CD8-positive, alpha-beta memory T cell (primary cell): ENCODE measurements at regions of chr2 and their contacts with region 1.

Region 1: DNA sequence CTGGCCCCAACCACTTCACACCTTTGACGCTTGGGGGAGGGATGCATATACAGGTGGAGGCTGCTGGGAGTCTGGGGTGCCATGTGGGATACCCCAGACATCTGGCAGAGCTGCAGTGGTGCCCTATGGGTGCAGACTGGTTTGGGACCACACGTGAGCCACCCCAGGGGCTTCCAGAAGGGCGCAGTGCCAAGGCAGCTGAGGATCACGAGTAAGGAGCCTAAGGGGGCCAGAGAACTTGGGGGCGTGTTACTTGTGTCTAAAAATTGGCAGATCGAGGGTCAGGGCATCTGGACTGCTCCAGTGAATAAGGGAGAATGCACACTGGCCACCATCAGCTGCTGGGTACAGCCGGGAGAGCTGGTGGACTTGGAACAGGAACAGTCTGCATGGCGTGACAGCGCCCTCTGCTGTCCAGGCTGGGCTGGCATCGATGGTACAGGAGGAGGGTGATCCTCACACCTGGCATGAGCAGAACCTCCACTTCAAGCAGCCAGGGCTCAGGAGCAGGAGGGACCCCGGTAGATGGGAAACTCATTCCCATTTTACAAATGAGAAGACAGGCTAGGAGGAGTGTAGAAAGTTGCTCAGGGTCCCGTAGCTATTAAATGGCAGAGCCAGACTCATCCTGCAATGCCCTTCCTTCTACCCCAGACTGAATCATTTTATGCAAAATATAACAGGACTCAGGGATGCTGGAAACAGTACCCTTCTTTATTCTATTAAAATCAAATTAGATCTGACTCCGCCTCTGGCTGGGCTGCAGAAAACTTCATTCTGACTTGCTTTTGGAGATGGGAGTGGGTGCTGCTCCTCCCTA is 60.4 kb downstream of the ATOH8 start:
- DNase-seq: peak; percentile 62 to 82 (median 75)
- H3K4me3 ChIP-seq: no peak overlapping the region
- H3K4me3 Mint-ChIP-seq: peak overlapping the region in 1 of 7 donors; percentile 1
- H3K27ac ChIP-seq: no peak overlapping the region
- H3K27ac Mint-ChIP-seq: peak overlapping the region in 1 of 8 donors; percentile 61
- H3K4me1 ChIP-seq: no peaks in the 10 kb centered on the region
- H3K4me1 Mint-ChIP-seq: peaks cover 0 to 3% (median 0%) of the 10 kb centered on the region in 3 donors
- H3K27me3 ChIP-seq: no peaks in the 10 kb centered on the region
- H3K27me3 Mint-ChIP-seq: peaks cover 14 to 27% of the 10 kb centered on the region in 2 donors

Region 2: GRCh38 chr2:85728883-85729824 is 85.0 kb before region 1 on chr2:
- CTCF ChIA-PET with region 1: interaction called, 23 read pairs
- POLR2A ChIA-PET with region 1: no interaction called
- DNase-seq: peak; percentile 48 to 69 (median 60)
- H3K4me3 ChIP-seq: no peak overlapping the region
- H3K4me3 Mint-ChIP-seq: no peak overlapping the region
- H3K27ac ChIP-seq: no peak overlapping the region
- H3K27ac Mint-ChIP-seq: peak overlapping the region in 1 of 8 donors; percentile 56
- H3K4me1 ChIP-seq: peaks cover 8% of the 10 kb centered on the region
- H3K4me1 Mint-ChIP-seq: peaks cover 0 to 11% (median 0%) of the 10 kb centered on the region in 3 donors
- H3K27me3 ChIP-seq: peaks cover 6% of the 10 kb centered on the region
- H3K27me3 Mint-ChIP-seq: peaks cover 18 to 19% of the 10 kb centered on the region in 2 donors

Region 3: GRCh38 chr2:85750587-85751575 is 63.3 kb before region 1 on chr2:
- CTCF ChIA-PET with region 1: interaction called, 19 read pairs
- POLR2A ChIA-PET with region 1: no interaction called
- DNase-seq: peak; percentile 22 to 56 (median 36)
- H3K4me3 ChIP-seq: no peak overlapping the region
- H3K4me3 Mint-ChIP-seq: peak overlapping the region in 2 of 7 donors; percentile 35 to 78
- H3K27ac ChIP-seq: no peak overlapping the region
- H3K27ac Mint-ChIP-seq: peak overlapping the region in 1 of 8 donors; percentile 37
- H3K4me1 ChIP-seq: peaks cover 10% of the 10 kb centered on the region
- H3K4me1 Mint-ChIP-seq: peaks cover 12 to 26% (median 14%) of the 10 kb centered on the region in 3 donors
- H3K27me3 ChIP-seq: peaks cover 35% of the 10 kb centered on the region
- H3K27me3 Mint-ChIP-seq: peaks cover 40 to 69% of the 10 kb centered on the region in 2 donors